ENCODE measurements at regions of chr13 and their contacts with region 1.

Region 1: DNA sequence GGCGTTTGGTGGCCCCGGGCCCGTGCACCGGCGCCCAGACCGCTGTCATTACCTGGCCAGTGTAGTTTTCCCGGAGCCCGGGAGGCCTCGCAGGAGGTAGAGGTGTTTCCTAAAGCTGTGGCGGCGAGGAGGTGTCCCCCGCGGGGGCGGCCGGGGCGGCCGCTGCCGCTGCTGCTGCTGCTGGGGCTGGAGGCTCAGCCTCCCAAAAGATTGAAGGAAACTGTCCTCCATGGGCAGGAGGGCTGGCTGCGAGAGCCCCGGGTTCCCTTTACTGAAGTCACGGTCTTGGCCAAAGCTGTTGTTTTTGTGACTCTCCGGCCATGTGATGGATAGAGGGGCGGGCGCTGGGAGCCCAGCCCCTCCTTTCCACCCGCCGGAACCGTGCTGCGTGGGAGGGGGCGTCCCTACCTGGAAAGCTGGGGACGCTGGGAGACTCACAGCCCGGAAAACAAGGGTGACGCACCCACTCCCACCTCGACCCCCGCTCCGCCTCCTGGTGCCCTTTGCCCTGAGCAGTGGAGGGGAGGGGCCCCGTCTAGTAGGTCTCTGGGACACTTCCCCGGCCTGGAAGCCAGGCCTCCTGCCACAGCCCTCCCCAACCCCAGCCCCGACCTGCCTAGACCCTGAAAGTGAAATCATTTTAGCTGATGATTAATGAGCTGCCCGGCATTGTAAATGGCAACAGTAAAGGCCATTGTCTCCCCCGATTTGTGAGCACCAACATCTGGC is at the start of gene N4BP2L1:
- DNase-seq: peak; percentile 58 to 94 (median 78)
- ATAC-seq: peak; percentile 73
- H3K4me3 ChIP-seq: peak within 1 kb of the TSS; percentile 79
- H3K4me3 Mint-ChIP-seq: peak within 1 kb of the TSS; percentile 96
- H3K27ac ChIP-seq: peak within 1 kb of the TSS; percentile 91 to 94
- H3K27ac Mint-ChIP-seq: peak within 1 kb of the TSS; percentile 96
- H3K4me1 ChIP-seq: peaks cover 40% of the 10 kb centered on the region
- H3K4me1 Mint-ChIP-seq: peaks cover 45% of the 10 kb centered on the region
- H3K27me3 ChIP-seq: no peaks in the 10 kb centered on the region
- H3K27me3 Mint-ChIP-seq: no peaks in the 10 kb centered on the region
- CTCF ChIP-seq: no peak
- total RNA-seq, gene N4BP2L1: 47.5 to 50.5 TPM

Region 2: GRCh38 chr13:31161828-31162590 is 1266.0 kb before region 1 on chr13 and contains the start of gene HSPH1:
- CTCF ChIA-PET with region 1: no interaction called
- POLR2A ChIA-PET with region 1: no interaction called
- intact Hi-C with region 1: loop called (anchors 5 to 10 kb)
- DNase-seq: peak; percentile 95 to 99 (median 98)
- ATAC-seq: peak; percentile 81
- H3K4me3 ChIP-seq: peak within 1 kb of the TSS; percentile 93
- H3K4me3 Mint-ChIP-seq: peak within 1 kb of the TSS; percentile 96
- H3K27ac ChIP-seq: peak within 1 kb of the TSS; percentile 94 to 95
- H3K27ac Mint-ChIP-seq: peak within 1 kb of the TSS; percentile 98
- H3K4me1 ChIP-seq: peaks cover 17% of the 10 kb centered on the region
- H3K4me1 Mint-ChIP-seq: peaks cover 46% of the 10 kb centered on the region
- H3K27me3 ChIP-seq: no peaks in the 10 kb centered on the region
- H3K27me3 Mint-ChIP-seq: no peaks in the 10 kb centered on the region
- CTCF ChIP-seq: peak; percentile 13
- total RNA-seq, gene HSPH1: 226 to 238 TPM

Region 3: GRCh38 chr13:32019612-32020233 is 408.3 kb before region 1 on chr13:
- CTCF ChIA-PET with region 1: no interaction called
- POLR2A ChIA-PET with region 1: no interaction called
- intact Hi-C with region 1: loop called in 1 of 2 experiments (anchors 10 kb)
- DNase-seq: peak in 9 of 14 experiments; percentile 2 to 62 (median 21)
- ATAC-seq: peak; percentile 68
- H3K4me3 ChIP-seq: no peak overlapping the region
- H3K4me3 Mint-ChIP-seq: no peak overlapping the region
- H3K27ac ChIP-seq: no peak overlapping the region
- H3K27ac Mint-ChIP-seq: no peak overlapping the region
- H3K4me1 ChIP-seq: no peaks in the 10 kb centered on the region
- H3K4me1 Mint-ChIP-seq: no peaks in the 10 kb centered on the region
- H3K27me3 ChIP-seq: no peaks in the 10 kb centered on the region
- H3K27me3 Mint-ChIP-seq: no peaks in the 10 kb centered on the region
- CTCF ChIP-seq: peak; percentile 51

Region 4: GRCh38 chr13:32164622-32165268 is 263.3 kb before region 1 on chr13:
- CTCF ChIA-PET with region 1: no interaction called
- POLR2A ChIA-PET with region 1: interaction called, 3 read pairs
- intact Hi-C with region 1: loop called in 1 of 2 experiments (anchors 5 kb)
- DNase-seq: peak in 4 of 14 experiments; percentile 21 to 58 (median 47)
- ATAC-seq: peak; percentile 70
- H3K4me3 ChIP-seq: no peak overlapping the region
- H3K4me3 Mint-ChIP-seq: no peak overlapping the region
- H3K27ac ChIP-seq: no peak overlapping the region
- H3K27ac Mint-ChIP-seq: no peak overlapping the region
- H3K4me1 ChIP-seq: no peaks in the 10 kb centered on the region
- H3K4me1 Mint-ChIP-seq: no peaks in the 10 kb centered on the region
- H3K27me3 ChIP-seq: no peaks in the 10 kb centered on the region
- H3K27me3 Mint-ChIP-seq: no peaks in the 10 kb centered on the region
- CTCF ChIP-seq: peak; percentile 53

Region 5: GRCh38 chr13:32315238-32316027 is 112.6 kb before region 1 on chr13 and contains the starts of genes BRCA2 and ZAR1L:
- CTCF ChIA-PET with region 1: no interaction called
- POLR2A ChIA-PET with region 1: interaction called, 83 read pairs
- intact Hi-C with region 1: loop called (anchors 2 kb)
- DNase-seq: peak; percentile 74 to 95 (median 82)
- ATAC-seq: peak; percentile 94
- H3K4me3 ChIP-seq: peak within 1 kb of the TSS; percentile 84
- H3K4me3 Mint-ChIP-seq: peak within 1 kb of the TSS; percentile 96
- H3K27ac ChIP-seq: peak within 1 kb of the TSS; percentile 99 to 100
- H3K27ac Mint-ChIP-seq: peak within 1 kb of the TSS; percentile 100
- H3K4me1 ChIP-seq: peaks cover 15% of the 10 kb centered on the region
- H3K4me1 Mint-ChIP-seq: peaks cover 16% of the 10 kb centered on the region
- H3K27me3 ChIP-seq: no peaks in the 10 kb centered on the region
- H3K27me3 Mint-ChIP-seq: no peaks in the 10 kb centered on the region
- CTCF ChIP-seq: no peak
- total RNA-seq, gene BRCA2: 1.9 to 2.4 TPM
- total RNA-seq, gene ZAR1L: not detected

Region 6: DNA sequence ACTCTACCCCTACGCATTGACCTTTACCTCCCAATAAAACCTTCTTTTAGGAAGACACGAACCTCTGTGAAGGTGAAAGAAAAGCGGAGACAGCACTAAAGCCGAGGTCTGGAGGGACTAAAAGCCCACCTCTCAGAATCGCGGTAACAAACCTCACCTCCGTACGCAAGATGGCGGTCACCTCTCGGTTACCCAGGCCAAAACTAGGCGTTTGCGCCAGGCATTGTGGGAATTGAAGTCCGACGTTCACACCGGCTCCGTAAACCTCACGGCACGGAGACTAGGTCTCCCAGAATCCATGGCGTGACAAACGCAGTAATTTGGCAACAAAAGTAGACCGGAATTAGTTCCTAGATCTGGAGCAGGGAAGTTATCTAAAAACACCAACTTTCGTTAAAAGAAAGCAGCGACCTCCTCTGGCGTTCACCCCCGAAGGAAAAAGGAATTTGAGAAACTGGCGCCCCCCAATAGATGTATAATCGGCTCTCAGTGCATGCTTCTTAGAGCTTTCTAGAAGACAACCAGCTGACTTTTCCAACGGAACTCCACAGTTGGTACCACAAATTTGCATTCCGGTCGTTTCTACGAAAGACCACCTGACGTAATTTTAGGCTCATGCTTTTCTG is 110.7 kb after region 1 on chr13 and contains the start of gene N4BP2L2:
- CTCF ChIA-PET with region 1: no interaction called
- POLR2A ChIA-PET with region 1: interaction called, 41 read pairs
- intact Hi-C with region 1: loop called (anchors 2 to 5 kb)
- DNase-seq: peak; percentile 82 to 97 (median 88)
- ATAC-seq: peak; percentile 96
- H3K4me3 ChIP-seq: peak within 1 kb of the TSS; percentile 81
- H3K4me3 Mint-ChIP-seq: peak within 1 kb of the TSS; percentile 100
- H3K27ac ChIP-seq: peak within 1 kb of the TSS; percentile 98
- H3K27ac Mint-ChIP-seq: peak within 1 kb of the TSS; percentile 100
- H3K4me1 ChIP-seq: peaks cover 18% of the 10 kb centered on the region
- H3K4me1 Mint-ChIP-seq: peaks cover 55% of the 10 kb centered on the region
- H3K27me3 ChIP-seq: no peaks in the 10 kb centered on the region
- H3K27me3 Mint-ChIP-seq: peaks cover 5% of the 10 kb centered on the region
- CTCF ChIP-seq: peak; percentile 33
- total RNA-seq, gene N4BP2L2: 171 TPM

Region 7: DNA sequence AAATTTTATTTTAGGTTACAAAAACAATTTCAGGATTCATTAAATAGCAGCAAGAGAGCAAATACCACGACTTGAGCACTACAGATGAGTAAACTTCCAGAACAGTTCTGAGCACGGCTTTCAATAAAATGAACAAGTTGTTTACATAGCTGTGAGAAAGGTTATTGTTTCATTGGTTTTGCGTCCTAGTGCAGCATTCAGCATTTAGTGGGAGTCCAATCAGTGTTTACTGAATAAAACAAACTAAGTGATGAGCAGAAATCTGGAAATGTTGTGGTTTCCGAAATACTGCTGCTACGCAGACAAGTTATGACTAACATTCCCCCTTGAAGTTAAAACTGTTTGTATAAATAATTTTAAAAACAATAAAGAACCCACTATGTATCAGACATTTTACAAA is 1109.0 kb after region 1 on chr13:
- CTCF ChIA-PET with region 1: no interaction called
- POLR2A ChIA-PET with region 1: no interaction called
- intact Hi-C with region 1: loop called in 1 of 2 experiments (anchors 5 kb)
- DNase-seq: no peak
- ATAC-seq: no peak
- H3K4me3 ChIP-seq: no peak overlapping the region
- H3K4me3 Mint-ChIP-seq: no peak overlapping the region
- H3K27ac ChIP-seq: no peak overlapping the region
- H3K27ac Mint-ChIP-seq: no peak overlapping the region
- H3K4me1 ChIP-seq: peaks cover 11% of the 10 kb centered on the region
- H3K4me1 Mint-ChIP-seq: peaks cover 25% of the 10 kb centered on the region
- H3K27me3 ChIP-seq: no peaks in the 10 kb centered on the region
- H3K27me3 Mint-ChIP-seq: no peaks in the 10 kb centered on the region
- CTCF ChIP-seq: no peak

Measured in CD4-positive, alpha-beta T cell (primary cell).